Heart left ventricle (tissue), 16 donors: ENCODE measurements at regions of chr1 and their contacts with region 1.

Region 1: DNA sequence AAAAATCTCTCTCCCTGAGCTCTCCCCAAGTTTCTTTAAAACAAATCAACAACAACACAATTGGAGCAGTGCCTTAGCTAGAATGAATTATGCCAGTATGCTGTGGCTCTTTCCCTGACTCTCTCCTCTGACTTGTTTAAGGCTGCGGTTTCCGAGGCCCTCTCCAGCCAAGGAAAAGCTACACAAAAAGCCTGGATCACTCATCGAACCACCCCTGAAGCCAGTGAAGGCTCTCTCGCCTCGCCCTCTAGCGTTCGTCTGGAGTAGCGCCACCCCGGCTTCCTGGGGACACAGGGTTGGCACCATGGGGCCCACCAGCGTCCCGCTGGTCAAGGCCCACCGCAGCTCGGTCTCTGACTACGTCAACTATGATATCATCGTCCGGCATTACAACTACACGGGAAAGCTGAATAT is 1.9 kb downstream of the S1PR1 start:
- DNase-seq: peak; percentile 88 to 93 (median 90)
- ATAC-seq: peak; percentile 37 to 73 (median 70)
- H3K4me3 ChIP-seq: peak overlapping the region; percentile 60 to 88 (median 73)
- H3K27ac ChIP-seq: peak overlapping the region; percentile 63 to 99 (median 95)
- H3K4me1 ChIP-seq: peaks cover 0 to 65% (median 35%) of the 10 kb centered on the region in 12 donors
- H3K27me3 ChIP-seq: no peaks in the 10 kb centered on the region
- CTCF ChIP-seq: peak; percentile 90 to 98 (median 94)
- POLR2A ChIP-seq: peak in 1 of 2 donors; percentile 41

Region 2: DNA sequence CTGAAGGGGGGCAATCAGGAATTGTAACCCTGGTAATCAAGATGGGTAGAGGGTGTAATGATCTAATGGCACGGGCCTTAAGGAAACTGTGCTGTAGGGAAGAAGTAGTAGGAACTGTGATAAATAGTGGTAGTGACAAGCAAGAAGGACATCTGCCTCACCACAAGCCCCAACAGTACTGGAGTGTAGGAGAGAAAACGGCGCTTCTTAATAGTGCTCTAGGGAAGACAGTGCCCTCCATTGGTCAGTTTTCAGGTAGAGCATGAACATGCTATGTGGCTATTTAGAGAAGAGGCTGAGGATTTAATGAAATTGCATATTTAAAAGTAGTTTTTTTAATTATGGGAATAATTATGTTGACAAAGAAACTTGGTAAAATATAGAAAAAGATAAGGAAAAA is 310.6 kb before region 1 on chr1:
- intact Hi-C with region 1: loop called in 3 of 10 experiments (anchors 2 to 5 kb)
- DNase-seq: no peak
- ATAC-seq: peak in 1 of 4 donors; percentile 48
- H3K4me3 ChIP-seq: no peak overlapping the region
- H3K27ac ChIP-seq: peak overlapping the region in 1 of 12 donors; percentile 77
- H3K4me1 ChIP-seq: peaks cover 0 to 21% (median 0%) of the 10 kb centered on the region in 12 donors
- H3K27me3 ChIP-seq: no peaks in the 10 kb centered on the region
- CTCF ChIP-seq: peak in 3 of 12 donors; percentile 8 to 23 (median 21)
- POLR2A ChIP-seq: no peak

Region 3: GRCh38 chr1:101025657-101026504 is 212.8 kb before region 1 on chr1 and contains the start of gene DPH5:
- intact Hi-C with region 1: loop called in 7 of 10 experiments (anchors 2 to 10 kb)
- DNase-seq: peak; percentile 88 to 95 (median 94)
- ATAC-seq: peak; percentile 98 to 99 (median 98)
- H3K4me3 ChIP-seq: peak within 1 kb of the TSS; percentile 44 to 88 (median 72)
- H3K27ac ChIP-seq: peak within 1 kb of the TSS; percentile 56 to 93 (median 88)
- H3K4me1 ChIP-seq: peaks cover 0 to 56% (median 18%) of the 10 kb centered on the region in 12 donors
- H3K27me3 ChIP-seq: no peaks in the 10 kb centered on the region
- CTCF ChIP-seq: no peak
- POLR2A ChIP-seq: no peak
- total RNA-seq, gene DPH5: 14.8 to 36.2 (median 26.5) TPM

Region 4: GRCh38 chr1:101043776-101044175 is 194.9 kb before region 1 on chr1:
- intact Hi-C with region 1: loop called in 4 of 10 experiments (anchors 5 to 10 kb)
- DNase-seq: no peak
- ATAC-seq: peak; percentile 75 to 86 (median 79)
- H3K4me3 ChIP-seq: no peak overlapping the region
- H3K27ac ChIP-seq: peak overlapping the region in 2 of 12 donors; percentile 19 to 21
- H3K4me1 ChIP-seq: peaks cover 0 to 14% (median 5%) of the 10 kb centered on the region in 12 donors
- H3K27me3 ChIP-seq: no peaks in the 10 kb centered on the region
- CTCF ChIP-seq: peak in 7 of 12 donors; percentile 26 to 48 (median 32)
- POLR2A ChIP-seq: no peak

Region 5: GRCh38 chr1:101136739-101137138 is 101.9 kb before region 1 on chr1:
- intact Hi-C with region 1: loop called (anchors 2 to 10 kb)
- DNase-seq: no peak
- ATAC-seq: peak; percentile 34 to 68 (median 59)
- H3K4me3 ChIP-seq: no peak overlapping the region
- H3K27ac ChIP-seq: peak overlapping the region in 3 of 12 donors; percentile 23 to 33 (median 25)
- H3K4me1 ChIP-seq: peaks cover 0 to 38% (median 21%) of the 10 kb centered on the region in 12 donors
- H3K27me3 ChIP-seq: no peaks in the 10 kb centered on the region
- CTCF ChIP-seq: peak in 9 of 12 donors; percentile 22 to 57 (median 43)
- POLR2A ChIP-seq: no peak

Region 6: GRCh38 chr1:101178688-101179491 is 59.8 kb before region 1 on chr1:
- intact Hi-C with region 1: loop called in 3 of 10 experiments (anchors 5 kb)
- DNase-seq: no peak
- ATAC-seq: no peak
- H3K4me3 ChIP-seq: no peak overlapping the region
- H3K27ac ChIP-seq: peak overlapping the region in 2 of 12 donors; percentile 1 to 66
- H3K4me1 ChIP-seq: peaks cover 0 to 30% (median 5%) of the 10 kb centered on the region in 12 donors
- H3K27me3 ChIP-seq: no peaks in the 10 kb centered on the region
- CTCF ChIP-seq: no peak
- POLR2A ChIP-seq: no peak

Region 7: GRCh38 chr1:101288491-101288944 is 49.8 kb after region 1 on chr1:
- intact Hi-C with region 1: loop called in 5 of 10 experiments (anchors 2 to 5 kb)
- DNase-seq: peak in 4 of 5 donors; percentile 40 to 60 (median 50)
- ATAC-seq: peak; percentile 77 to 90 (median 88)
- H3K4me3 ChIP-seq: peak overlapping the region in 5 of 12 donors; percentile 8 to 28 (median 10)
- H3K27ac ChIP-seq: peak overlapping the region in 1 of 12 donors; percentile 61
- H3K4me1 ChIP-seq: peaks cover 0 to 71% (median 2%) of the 10 kb centered on the region in 12 donors
- H3K27me3 ChIP-seq: no peaks in the 10 kb centered on the region
- CTCF ChIP-seq: peak; percentile 89 to 97 (median 94)
- POLR2A ChIP-seq: no peak